ENCODE measurements at regions of chr15 and their contacts with region 1.

Region 1: DNA sequence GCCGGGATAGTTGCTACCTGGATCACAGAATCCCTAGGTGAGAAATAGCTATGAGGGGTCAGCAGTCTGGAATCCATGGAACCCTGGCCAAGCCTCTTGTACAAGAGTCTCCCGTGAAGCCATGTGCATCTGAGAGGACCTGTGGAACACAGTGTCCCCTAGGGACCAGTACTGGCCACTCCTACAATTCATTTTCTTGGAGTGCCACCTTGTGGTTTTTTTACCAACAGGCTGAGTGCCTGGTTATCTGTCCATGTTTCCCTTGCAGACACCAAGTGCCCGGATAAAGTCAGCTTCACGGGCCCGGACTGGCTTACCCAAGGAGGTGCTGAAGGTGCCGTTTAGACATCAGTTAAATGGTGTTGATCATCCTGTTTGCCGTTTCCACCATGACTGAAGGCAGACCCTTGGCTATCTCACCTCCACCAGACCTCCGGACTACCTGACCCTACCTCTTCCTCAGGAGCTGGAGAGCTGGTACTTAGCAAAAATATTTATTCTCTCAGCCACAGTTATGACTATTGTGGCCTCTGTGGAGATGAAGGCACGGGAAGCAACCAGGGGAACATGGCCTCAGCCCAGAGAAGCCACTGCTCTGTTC is 93.9 kb downstream of the RBPMS2 start:
- DNase-seq: peak in 1 of 5 donors; percentile 45
- ATAC-seq: peak; percentile 75 to 83 (median 79)
- H3K4me3 ChIP-seq: no peak overlapping the region
- H3K27ac ChIP-seq: no peak overlapping the region
- H3K4me1 ChIP-seq: peaks cover 0 to 28% (median 9%) of the 10 kb centered on the region in 12 donors
- H3K27me3 ChIP-seq: no peaks in the 10 kb centered on the region
- CTCF ChIP-seq: peak; percentile 42 to 80 (median 65)
- POLR2A ChIP-seq: no peak

Region 2: DNA sequence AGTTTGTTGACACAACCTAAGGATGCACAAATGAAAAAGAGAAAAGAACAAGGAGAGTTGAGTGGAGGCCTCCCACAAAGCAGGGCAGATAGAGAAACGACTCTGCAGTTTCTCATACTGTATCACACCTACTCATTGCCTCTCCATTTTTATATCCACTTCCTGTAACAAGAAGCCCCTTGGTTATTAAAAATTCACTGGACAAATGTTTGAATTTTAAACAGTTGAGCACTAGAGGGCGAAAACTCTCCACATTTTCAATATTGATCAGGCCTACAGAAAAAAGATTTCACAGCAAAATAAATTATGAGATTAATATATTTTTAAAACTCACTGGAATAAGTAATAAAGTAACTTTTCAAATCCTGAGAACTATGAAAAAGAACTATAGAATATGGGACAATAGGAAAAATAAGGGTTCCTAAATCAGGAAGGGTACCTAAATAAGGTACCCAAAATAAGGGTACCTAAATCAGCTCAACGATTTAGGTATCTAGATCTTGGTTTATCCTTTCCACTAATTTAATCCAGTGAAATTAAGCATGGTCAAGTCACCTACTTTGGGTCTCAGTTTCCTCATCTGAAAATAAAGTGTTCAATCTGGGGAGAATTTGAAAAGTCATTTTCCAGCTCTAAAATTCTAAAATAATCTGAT is 471.7 kb before region 1 on chr15:
- intact Hi-C with region 1: loop called in 4 of 10 experiments (anchors 5 to 10 kb)
- DNase-seq: no peak
- ATAC-seq: no peak
- H3K4me3 ChIP-seq: no peak overlapping the region
- H3K27ac ChIP-seq: no peak overlapping the region
- H3K4me1 ChIP-seq: no peaks in the 10 kb centered on the region
- H3K27me3 ChIP-seq: no peaks in the 10 kb centered on the region
- CTCF ChIP-seq: peak; percentile 28 to 55 (median 44)
- POLR2A ChIP-seq: no peak

Region 3: GRCh38 chr15:64430000-64430735 is 251.4 kb before region 1 on chr15:
- intact Hi-C with region 1: loop called in 5 of 10 experiments (anchors 1 to 10 kb)
- DNase-seq: peak in 4 of 5 donors; percentile 22 to 42 (median 28)
- ATAC-seq: peak in 3 of 4 donors; percentile 70 to 75 (median 72)
- H3K4me3 ChIP-seq: no peak overlapping the region
- H3K27ac ChIP-seq: peak overlapping the region in 8 of 12 donors; percentile 11 to 68 (median 40)
- H3K4me1 ChIP-seq: peaks cover 0 to 20% (median 11%) of the 10 kb centered on the region in 12 donors
- H3K27me3 ChIP-seq: no peaks in the 10 kb centered on the region
- CTCF ChIP-seq: no peak
- POLR2A ChIP-seq: no peak

Region 4: GRCh38 chr15:64731012-64731806 is 49.7 kb after region 1 on chr15:
- intact Hi-C with region 1: loop called in 8 of 10 experiments (anchors 1 to 2 kb)
- DNase-seq: peak; percentile 81 to 89 (median 83)
- ATAC-seq: peak; percentile 47 to 79 (median 70)
- H3K4me3 ChIP-seq: no peak overlapping the region
- H3K27ac ChIP-seq: peak overlapping the region in 1 of 12 donors; percentile 19
- H3K4me1 ChIP-seq: peaks cover 0 to 14% (median 0%) of the 10 kb centered on the region in 12 donors
- H3K27me3 ChIP-seq: no peaks in the 10 kb centered on the region
- CTCF ChIP-seq: peak; percentile 82 to 96 (median 90)
- POLR2A ChIP-seq: no peak

Region 5: GRCh38 chr15:64905119-64905831 is 223.8 kb after region 1 on chr15:
- intact Hi-C with region 1: loop called in 2 of 10 experiments (anchors 2 to 5 kb)
- DNase-seq: peak; percentile 81 to 92 (median 83)
- ATAC-seq: peak; percentile 68 to 95 (median 94)
- H3K4me3 ChIP-seq: peak overlapping the region in 10 of 12 donors; percentile 10 to 59 (median 44)
- H3K27ac ChIP-seq: peak overlapping the region in 4 of 12 donors; percentile 5 to 59 (median 42)
- H3K4me1 ChIP-seq: peaks cover 0 to 38% (median 2%) of the 10 kb centered on the region in 12 donors
- H3K27me3 ChIP-seq: peaks cover 0 to 2% (median 0%) of the 10 kb centered on the region in 9 donors
- CTCF ChIP-seq: peak; percentile 82 to 96 (median 91)
- POLR2A ChIP-seq: no peak

Measured in heart left ventricle (tissue), 16 donors.